ENCODE measurements at regions of chrX and their contacts with region 1.

Region 1: GRCh38 chrX:18377796-18378195 is 23.3 kb upstream of the SCML2 start:
- DNase-seq: peak in 6 of 9 donors; percentile 21 to 39 (median 24)
- ATAC-seq: peak; percentile 74
- H3K4me3 ChIP-seq: no peak overlapping the region
- H3K4me3 Mint-ChIP-seq: peak overlapping the region in 3 of 10 donors; percentile 20 to 37 (median 26)
- H3K27ac ChIP-seq: no peak overlapping the region
- H3K27ac Mint-ChIP-seq: peak overlapping the region in 5 of 9 donors; percentile 58 to 83 (median 62)
- H3K4me1 ChIP-seq: no peaks in the 10 kb centered on the region
- H3K4me1 Mint-ChIP-seq: peaks cover 0 to 6% (median 5%) of the 10 kb centered on the region in 7 donors
- H3K27me3 ChIP-seq: no peaks in the 10 kb centered on the region
- H3K27me3 Mint-ChIP-seq: no peaks in the 10 kb centered on the region

Region 2: DNA sequence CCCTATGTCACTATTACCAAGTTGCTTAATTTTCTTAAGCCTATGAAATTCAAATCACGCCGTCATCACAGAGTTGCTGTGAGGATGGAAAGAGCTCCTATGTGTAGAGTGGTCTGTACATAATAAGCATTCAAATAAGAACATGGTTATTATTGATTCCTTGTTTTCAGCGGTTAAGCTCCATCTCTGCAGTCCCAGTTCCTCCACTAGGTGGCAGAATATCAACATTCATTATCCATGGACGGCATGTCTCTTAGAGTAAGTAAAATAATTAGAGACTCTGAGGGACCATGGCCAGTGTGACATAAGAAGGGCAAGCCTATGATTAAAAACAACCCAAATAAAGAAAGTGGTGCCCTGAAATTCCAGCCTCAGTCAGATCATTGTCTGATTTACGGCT is 1135.3 kb before region 1 on chrX:
- CTCF ChIA-PET with region 1: interaction called, 3 read pairs
- POLR2A ChIA-PET with region 1: no interaction called
- intact Hi-C with region 1: loop called in 1 of 2 experiments (anchors 10 kb)
- DNase-seq: peak in 6 of 9 donors; percentile 7 to 34 (median 17)
- ATAC-seq: peak; percentile 36
- H3K4me3 ChIP-seq: no peak overlapping the region
- H3K4me3 Mint-ChIP-seq: no peak overlapping the region
- H3K27ac ChIP-seq: no peak overlapping the region
- H3K27ac Mint-ChIP-seq: no peak overlapping the region
- H3K4me1 ChIP-seq: no peaks in the 10 kb centered on the region
- H3K4me1 Mint-ChIP-seq: no peaks in the 10 kb centered on the region
- H3K27me3 ChIP-seq: no peaks in the 10 kb centered on the region
- H3K27me3 Mint-ChIP-seq: peaks cover 0 to 11% (median 0%) of the 10 kb centered on the region in 5 donors

Region 3: DNA sequence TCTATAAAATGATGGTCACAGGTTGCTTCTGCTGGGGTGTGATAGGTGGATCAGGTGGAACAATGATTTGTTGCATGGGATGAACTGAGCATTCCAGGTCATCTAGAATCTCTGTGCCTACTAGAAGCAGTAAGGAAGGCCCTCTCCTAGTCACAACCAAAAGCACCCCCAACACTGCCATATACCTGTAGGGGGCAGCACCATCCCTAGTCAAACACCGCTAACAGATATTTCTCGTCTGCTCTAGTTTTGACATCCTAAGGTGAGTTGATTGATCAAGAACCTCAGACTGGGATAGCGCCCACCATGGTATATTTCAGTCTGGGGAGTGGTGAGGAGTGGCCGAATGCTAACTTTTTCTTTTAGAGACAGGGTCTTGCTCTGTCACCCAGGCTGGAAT is 842.6 kb before region 1 on chrX:
- CTCF ChIA-PET with region 1: no interaction called
- POLR2A ChIA-PET with region 1: no interaction called
- intact Hi-C with region 1: loop called in 1 of 2 experiments (anchors 5 kb)
- DNase-seq: peak in 5 of 9 donors; percentile 3 to 34 (median 4)
- ATAC-seq: peak; percentile 52
- H3K4me3 ChIP-seq: no peak overlapping the region
- H3K4me3 Mint-ChIP-seq: no peak overlapping the region
- H3K27ac ChIP-seq: no peak overlapping the region
- H3K27ac Mint-ChIP-seq: no peak overlapping the region
- H3K4me1 ChIP-seq: no peaks in the 10 kb centered on the region
- H3K4me1 Mint-ChIP-seq: peaks cover 0 to 2% (median 0%) of the 10 kb centered on the region in 7 donors
- H3K27me3 ChIP-seq: no peaks in the 10 kb centered on the region
- H3K27me3 Mint-ChIP-seq: no peaks in the 10 kb centered on the region

Region 4: DNA sequence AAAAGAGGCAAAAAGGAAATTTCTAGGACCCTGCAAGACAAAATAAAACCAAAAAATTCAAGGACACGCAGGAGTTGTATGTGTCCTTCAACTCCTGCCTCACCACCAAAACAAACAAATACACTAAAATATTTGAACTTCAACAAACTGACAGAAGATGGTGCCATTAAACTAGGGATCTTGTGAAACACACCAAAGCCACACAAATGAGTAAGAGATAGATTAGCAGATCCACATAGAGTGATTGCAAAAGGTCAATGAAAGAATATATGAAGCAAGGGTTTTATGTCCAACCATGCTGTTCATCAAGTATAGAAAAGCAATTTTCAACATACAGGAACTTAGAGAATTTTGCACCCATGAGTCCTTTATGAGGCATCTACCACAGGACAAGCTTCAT is 680.6 kb before region 1 on chrX:
- CTCF ChIA-PET with region 1: interaction called, 4 read pairs
- POLR2A ChIA-PET with region 1: no interaction called
- intact Hi-C with region 1: loop called (anchors 1 to 5 kb)
- DNase-seq: peak in 5 of 9 donors; percentile 0 to 28 (median 14)
- ATAC-seq: no peak
- H3K4me3 ChIP-seq: no peak overlapping the region
- H3K4me3 Mint-ChIP-seq: no peak overlapping the region
- H3K27ac ChIP-seq: no peak overlapping the region
- H3K27ac Mint-ChIP-seq: no peak overlapping the region
- H3K4me1 ChIP-seq: no peaks in the 10 kb centered on the region
- H3K4me1 Mint-ChIP-seq: no peaks in the 10 kb centered on the region
- H3K27me3 ChIP-seq: no peaks in the 10 kb centered on the region
- H3K27me3 Mint-ChIP-seq: no peaks in the 10 kb centered on the region

Region 5: DNA sequence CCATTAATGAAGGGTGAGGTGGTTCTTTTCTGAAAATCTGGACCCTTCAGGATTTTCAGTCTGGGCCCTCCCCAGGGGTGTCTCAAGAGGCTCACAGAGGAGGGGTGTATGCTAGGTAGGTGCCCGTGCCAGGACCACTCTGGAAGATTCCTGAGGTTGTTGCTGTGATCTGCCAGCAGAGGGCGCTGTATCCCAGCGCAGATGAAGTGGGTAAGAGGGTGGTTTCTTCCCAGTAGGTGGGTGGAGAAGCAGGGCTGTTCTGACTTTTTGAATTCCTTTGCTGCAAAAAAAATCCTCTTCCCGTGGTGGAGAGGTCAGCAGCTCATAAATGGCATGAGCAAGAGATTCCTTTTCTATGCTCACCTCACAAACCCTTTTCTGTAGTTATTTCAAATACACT is 589.4 kb before region 1 on chrX:
- CTCF ChIA-PET with region 1: no interaction called
- POLR2A ChIA-PET with region 1: no interaction called
- intact Hi-C with region 1: loop called in 1 of 2 experiments (anchors 1 kb)
- DNase-seq: peak; percentile 14 to 58 (median 32)
- ATAC-seq: peak; percentile 79
- H3K4me3 ChIP-seq: no peak overlapping the region
- H3K4me3 Mint-ChIP-seq: peak overlapping the region in 4 of 10 donors; percentile 17 to 25 (median 22)
- H3K27ac ChIP-seq: no peak overlapping the region
- H3K27ac Mint-ChIP-seq: peak overlapping the region in 3 of 9 donors; percentile 38 to 75 (median 65)
- H3K4me1 ChIP-seq: peaks cover 0 to 7% of the 10 kb centered on the region in 2 donors
- H3K4me1 Mint-ChIP-seq: peaks cover 5 to 25% (median 19%) of the 10 kb centered on the region in 7 donors
- H3K27me3 ChIP-seq: no peaks in the 10 kb centered on the region
- H3K27me3 Mint-ChIP-seq: peaks cover 0 to 4% (median 0%) of the 10 kb centered on the region in 5 donors

Region 6: DNA sequence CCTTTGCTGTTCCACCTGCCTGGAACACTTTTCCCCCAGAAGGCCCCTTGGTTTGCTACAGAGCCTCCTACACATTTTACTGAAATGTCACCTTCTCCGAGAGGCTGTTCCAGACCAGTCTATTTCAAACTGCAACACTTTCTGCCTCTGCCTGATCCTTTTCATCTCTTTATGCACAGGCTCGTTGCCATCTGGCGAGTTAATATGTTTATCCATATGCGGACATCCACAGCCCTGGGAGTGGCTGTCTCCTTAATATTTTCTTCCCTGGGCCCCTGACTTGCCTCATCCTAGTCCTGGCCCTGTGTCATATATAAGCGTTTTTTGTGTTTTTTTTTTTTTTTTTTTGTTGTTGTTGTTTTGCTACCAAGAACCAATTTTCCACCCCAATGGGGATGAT is 671.3 kb after region 1 on chrX:
- CTCF ChIA-PET with region 1: no interaction called
- POLR2A ChIA-PET with region 1: no interaction called
- intact Hi-C with region 1: no loop called
- DNase-seq: no peak
- ATAC-seq: no peak
- H3K4me3 ChIP-seq: no peak overlapping the region
- H3K4me3 Mint-ChIP-seq: no peak overlapping the region
- H3K27ac ChIP-seq: no peak overlapping the region
- H3K27ac Mint-ChIP-seq: no peak overlapping the region
- H3K4me1 ChIP-seq: no peaks in the 10 kb centered on the region
- H3K4me1 Mint-ChIP-seq: no peaks in the 10 kb centered on the region
- H3K27me3 ChIP-seq: no peaks in the 10 kb centered on the region
- H3K27me3 Mint-ChIP-seq: peaks cover 0 to 4% (median 0%) of the 10 kb centered on the region in 5 donors